Calu3 (cell line): ENCODE measurements at regions of chr7 and their contacts with region 1.

Region 1: DNA sequence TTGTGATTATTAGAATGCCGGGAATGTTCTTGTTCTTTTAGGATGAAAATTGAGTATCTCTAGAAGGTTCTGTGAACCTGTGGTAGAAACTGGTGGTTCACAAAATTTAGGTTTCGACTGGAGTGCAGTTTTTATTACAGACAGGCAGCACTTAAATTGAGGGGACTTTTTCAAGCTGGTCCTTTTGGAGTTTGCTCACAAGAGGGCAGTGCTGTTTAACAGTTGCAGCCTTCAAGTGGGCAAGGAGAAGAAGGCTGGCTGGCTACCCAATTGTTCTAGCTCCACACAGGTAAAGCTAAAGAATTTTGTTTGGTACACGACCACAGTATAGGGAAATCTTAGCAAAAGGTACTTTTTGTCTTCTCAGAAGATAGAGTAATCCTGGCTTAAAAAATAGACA is 233.6 kb downstream of the SNX13 start:
- DNase-seq: peak; percentile 75
- H3K4me3 Mint-ChIP-seq: no peak overlapping the region
- H3K27ac Mint-ChIP-seq: no peak overlapping the region
- H3K4me1 Mint-ChIP-seq: no peaks in the 10 kb centered on the region
- H3K27me3 Mint-ChIP-seq: no peaks in the 10 kb centered on the region
- CTCF ChIP-seq: peak; percentile 84

Region 2: GRCh38 chr7:17474724-17475344 is 231.9 kb before region 1 on chr7:
- CTCF ChIA-PET with region 1: no interaction called
- intact Hi-C with region 1: no loop called
- DNase-seq: peak; percentile 28
- H3K4me3 Mint-ChIP-seq: no peak overlapping the region
- H3K27ac Mint-ChIP-seq: no peak overlapping the region
- H3K4me1 Mint-ChIP-seq: no peaks in the 10 kb centered on the region
- H3K27me3 Mint-ChIP-seq: no peaks in the 10 kb centered on the region
- CTCF ChIP-seq: peak; percentile 44

Region 3: DNA sequence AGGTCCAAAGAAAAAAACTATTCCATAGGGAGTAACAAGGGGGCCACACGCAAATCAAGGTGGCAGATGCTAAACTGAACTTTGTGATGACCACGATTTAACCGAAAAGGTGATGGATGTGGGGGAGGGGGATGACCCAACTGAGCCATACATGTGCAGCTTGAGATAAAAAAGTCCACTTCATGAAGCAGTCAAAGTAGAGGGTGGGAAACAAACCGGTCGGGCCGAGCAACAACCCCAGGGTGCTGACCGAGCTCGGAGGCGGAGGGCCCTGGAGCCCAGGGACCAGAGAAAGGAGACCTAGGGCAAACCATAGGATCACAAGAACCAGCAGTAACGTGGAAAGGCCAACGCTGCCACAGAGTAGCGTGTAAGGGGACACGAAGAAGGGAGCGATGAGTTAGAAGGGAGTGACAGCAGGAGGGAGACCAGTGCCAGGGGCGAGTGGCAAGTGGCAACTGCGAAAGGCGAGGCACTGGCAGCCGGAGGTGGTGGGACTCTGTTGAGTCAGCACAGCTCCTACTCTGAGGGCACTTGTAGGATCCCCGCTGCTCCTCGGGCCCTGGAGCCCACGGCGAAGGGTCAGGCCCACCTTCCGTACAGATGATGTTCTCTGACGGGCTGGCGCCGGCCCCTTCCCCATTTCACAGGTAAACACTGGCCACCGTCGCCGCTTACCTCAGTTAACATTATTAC is 233.0 kb after region 1 on chr7:
- CTCF ChIA-PET with region 1: no interaction called
- intact Hi-C with region 1: loop called (anchors 10 kb)
- DNase-seq: peak; percentile 63
- H3K4me3 Mint-ChIP-seq: peak overlapping the region; percentile 95
- H3K27ac Mint-ChIP-seq: peak overlapping the region; percentile 94
- H3K4me1 Mint-ChIP-seq: peaks cover 39% of the 10 kb centered on the region
- H3K27me3 Mint-ChIP-seq: no peaks in the 10 kb centered on the region
- CTCF ChIP-seq: no peak

Region 4: GRCh38 chr7:17965603-17966002 is 258.9 kb after region 1 on chr7:
- CTCF ChIA-PET with region 1: no interaction called
- intact Hi-C with region 1: loop called (anchors 5 kb)
- DNase-seq: no peak
- H3K4me3 Mint-ChIP-seq: no peak overlapping the region
- H3K27ac Mint-ChIP-seq: no peak overlapping the region
- H3K4me1 Mint-ChIP-seq: peaks cover 12% of the 10 kb centered on the region
- H3K27me3 Mint-ChIP-seq: no peaks in the 10 kb centered on the region
- CTCF ChIP-seq: no peak

Region 5: GRCh38 chr7:18125476-18125875 is 418.7 kb after region 1 on chr7:
- CTCF ChIA-PET with region 1: no interaction called
- intact Hi-C with region 1: loop called (anchors 5 kb)
- DNase-seq: no peak
- H3K4me3 Mint-ChIP-seq: no peak overlapping the region
- H3K27ac Mint-ChIP-seq: peak overlapping the region; percentile 55
- H3K4me1 Mint-ChIP-seq: peaks cover 51% of the 10 kb centered on the region
- H3K27me3 Mint-ChIP-seq: no peaks in the 10 kb centered on the region
- CTCF ChIP-seq: no peak